Posterior cingulate gyrus (tissue), 11 donors: ENCODE measurements at regions of chr11 and their contacts with region 1.

Region 1: DNA sequence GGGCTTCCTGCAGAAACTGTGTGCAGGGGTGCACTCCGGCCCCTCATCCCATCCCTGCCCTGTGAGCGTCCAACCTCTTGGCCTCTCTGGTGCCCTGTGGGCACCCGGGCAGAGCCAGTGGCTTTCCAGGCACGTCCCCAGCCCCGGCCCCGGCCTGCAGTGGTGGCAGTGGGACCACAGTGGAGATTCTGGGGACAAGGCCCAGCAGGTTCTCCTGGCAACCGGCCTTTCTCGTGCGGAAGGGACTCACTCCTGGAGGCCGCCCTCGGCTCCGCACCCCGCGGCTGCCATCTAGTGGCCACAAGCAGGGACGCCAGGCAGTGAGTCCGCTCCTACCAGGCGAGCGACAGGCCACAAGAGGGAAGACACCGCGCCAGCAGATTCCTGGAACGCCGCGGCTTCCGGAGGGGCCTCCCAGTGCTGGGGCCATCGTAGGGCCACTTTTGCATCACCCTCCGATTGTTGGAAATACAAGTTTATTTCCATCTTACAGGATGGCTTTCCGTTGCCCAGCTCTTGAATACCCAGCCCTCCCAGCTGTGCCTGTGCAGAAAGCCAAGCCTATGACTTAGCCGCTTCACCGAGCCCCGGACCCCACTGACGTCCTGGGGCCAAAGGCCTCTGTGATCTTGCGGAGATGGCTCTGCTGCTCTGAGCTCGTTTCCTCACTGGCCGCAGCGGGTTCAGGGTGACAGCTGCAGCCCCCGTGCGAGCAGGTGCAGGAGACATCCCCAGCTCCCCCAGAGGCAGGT is 357.3 kb downstream of the CTTN start:
- DNase-seq: peak; percentile 74 to 98 (median 88)

Region 2: GRCh38 chr11:70323806-70324205 is 431.8 kb before region 1 on chr11:
- intact Hi-C with region 1: no loop called
- DNase-seq: peak in 1 of 10 donors; percentile 8

Region 3: GRCh38 chr11:70341656-70342445 is 413.7 kb before region 1 on chr11:
- intact Hi-C with region 1: no loop called
- DNase-seq: peak in 1 of 10 donors; percentile 55

Region 4: GRCh38 chr11:70467201-70468085 is 288.1 kb before region 1 on chr11:
- intact Hi-C with region 1: loop called (anchors 1 kb)
- DNase-seq: peak; percentile 52 to 95 (median 78)

Region 5: GRCh38 chr11:70544809-70545537 is 210.6 kb before region 1 on chr11:
- intact Hi-C with region 1: no loop called
- DNase-seq: peak in 6 of 10 donors; percentile 46 to 92 (median 67)

Region 6: DNA sequence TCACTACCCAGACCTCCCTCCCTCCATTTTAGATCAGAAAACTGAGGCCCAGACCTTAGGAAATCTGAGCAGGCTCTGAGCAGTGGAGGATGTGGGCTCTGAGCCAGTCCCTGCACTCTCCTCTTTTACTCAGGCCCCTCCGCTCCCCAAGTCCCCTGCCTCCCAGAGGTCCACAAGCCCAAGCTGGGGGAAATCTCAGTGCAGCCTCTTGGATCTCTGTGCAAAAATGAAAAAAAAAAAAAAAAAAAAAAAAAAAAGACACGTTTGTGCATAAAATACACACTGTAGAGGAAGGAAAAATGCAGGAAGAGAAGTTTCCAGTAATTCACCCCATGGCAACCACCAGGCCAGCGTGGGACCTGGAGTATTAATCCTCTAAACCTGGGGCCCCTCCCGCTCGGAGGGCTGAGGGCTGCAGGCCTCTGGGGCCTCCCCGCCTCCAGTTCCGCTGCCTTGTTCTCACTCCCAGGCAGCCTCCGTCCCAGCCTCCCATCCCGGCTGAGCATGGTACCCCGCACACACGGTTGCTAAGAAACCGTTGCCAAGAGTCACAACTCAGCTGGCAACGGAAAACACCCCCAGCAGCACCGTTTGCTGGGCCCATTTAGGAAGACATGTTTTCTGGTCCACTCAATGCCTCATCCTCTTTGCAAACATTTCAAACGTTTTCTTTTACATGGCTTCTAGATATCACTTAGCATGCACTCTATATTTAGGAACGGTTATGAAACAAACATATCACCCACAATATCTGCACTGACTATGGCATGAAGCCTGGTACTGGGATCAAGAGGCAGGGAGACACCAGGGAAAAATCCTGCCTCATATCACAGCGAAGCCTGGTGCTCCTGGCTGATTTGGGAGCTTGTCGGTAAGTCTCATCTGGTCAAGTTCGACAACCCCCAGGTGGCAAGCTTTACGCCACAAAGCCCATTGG is 129.7 kb before region 1 on chr11:
- intact Hi-C with region 1: no loop called
- DNase-seq: peak in 9 of 10 donors; percentile 30 to 96 (median 77)